ENCODE measurements at regions of chr18 and their contacts with region 1.

Region 1: DNA sequence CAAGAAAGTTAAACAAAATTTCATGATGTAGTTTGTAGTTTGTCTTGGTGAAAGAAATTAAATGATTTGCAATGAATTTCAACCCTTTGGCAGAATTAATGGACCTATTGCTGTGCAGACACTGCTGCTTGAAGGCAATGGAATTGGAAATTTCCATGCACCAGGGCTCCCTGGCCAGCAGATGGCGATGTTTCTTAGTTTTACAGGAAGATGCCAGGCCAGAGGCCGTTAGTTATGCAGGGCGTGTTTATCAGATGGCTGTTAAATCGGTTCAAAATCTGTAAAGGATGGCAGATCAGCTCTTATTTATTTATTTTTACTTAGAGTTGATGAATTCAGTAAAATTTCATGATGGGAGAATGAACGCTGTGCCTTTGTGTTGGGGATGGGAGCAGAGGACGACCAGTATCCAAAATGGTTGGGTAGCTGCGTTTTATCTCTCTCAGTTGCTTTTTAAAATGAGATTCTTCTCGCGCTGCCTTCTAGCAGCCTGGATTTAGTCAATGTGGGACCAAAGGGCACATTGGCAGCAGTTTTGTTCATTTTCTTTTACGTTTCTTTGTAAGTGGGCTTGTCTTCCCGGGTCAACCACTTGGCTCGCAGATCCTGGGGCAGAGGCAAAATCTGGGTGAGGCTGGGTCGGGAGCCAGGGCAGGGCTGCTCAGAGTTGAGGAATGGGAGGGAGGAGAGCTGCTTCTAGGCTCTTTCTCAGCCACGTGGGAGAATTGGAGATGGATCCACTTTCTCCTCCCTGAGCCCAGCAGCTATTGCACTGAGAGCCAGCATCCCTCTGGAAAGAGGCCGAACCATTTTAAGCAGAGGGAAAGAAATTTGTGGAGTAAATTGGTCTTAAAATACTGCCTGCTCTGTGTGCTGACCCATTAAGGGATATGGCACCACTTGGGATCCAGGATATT is 344.0 kb downstream of the PIK3C3 start:
- DNase-seq: peak; percentile 79
- H3K4me3 Mint-ChIP-seq: no peak overlapping the region
- H3K27ac Mint-ChIP-seq: no peak overlapping the region
- H3K4me1 Mint-ChIP-seq: no peaks in the 10 kb centered on the region
- H3K27me3 Mint-ChIP-seq: peaks cover 7% of the 10 kb centered on the region

Region 2: DNA sequence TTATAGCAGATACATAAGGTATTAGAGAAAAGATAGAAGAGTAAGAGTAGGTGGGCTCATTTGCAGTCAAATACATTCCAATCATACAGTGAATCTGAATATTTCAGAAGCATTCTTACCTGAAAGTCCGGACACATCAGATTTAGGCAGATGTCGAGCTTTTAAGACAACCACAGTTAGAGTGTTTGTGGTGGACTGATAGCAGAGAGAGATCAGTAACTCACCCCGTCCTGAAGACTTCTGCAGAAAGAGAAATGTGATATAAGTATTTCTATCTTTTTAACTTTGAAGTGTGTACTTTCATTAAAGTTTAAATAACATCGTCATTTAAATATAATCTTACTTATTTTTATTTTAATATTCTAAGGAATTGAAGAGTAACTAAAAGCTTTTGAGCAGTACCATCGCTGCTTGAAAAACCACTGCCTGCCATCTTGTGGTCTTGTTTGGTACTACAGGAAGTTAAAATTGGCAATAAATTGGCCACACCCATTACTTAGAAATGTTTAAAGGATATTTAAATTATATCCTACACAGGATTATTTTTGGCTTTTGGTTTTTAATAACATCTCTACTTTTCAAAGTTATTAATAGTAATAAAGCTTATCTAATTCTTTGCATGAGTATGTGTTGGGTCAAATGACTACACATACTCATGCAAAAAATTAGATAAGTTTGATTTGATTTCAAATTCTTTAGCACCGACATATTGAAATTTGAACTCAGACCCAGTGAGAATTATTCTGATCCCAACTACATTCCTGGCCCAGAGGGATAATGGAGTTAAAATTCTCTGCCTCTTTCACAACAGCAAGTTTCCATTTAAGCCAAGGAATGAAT is 972.8 kb after region 1 on chr18:
- CTCF ChIA-PET with region 1: interaction called, 14 read pairs
- intact Hi-C with region 1: loop called (anchors 1 kb)
- DNase-seq: peak; percentile 36
- H3K4me3 Mint-ChIP-seq: no peak overlapping the region
- H3K27ac Mint-ChIP-seq: no peak overlapping the region
- H3K4me1 Mint-ChIP-seq: no peaks in the 10 kb centered on the region
- H3K27me3 Mint-ChIP-seq: peaks cover 3% of the 10 kb centered on the region

Region 3: DNA sequence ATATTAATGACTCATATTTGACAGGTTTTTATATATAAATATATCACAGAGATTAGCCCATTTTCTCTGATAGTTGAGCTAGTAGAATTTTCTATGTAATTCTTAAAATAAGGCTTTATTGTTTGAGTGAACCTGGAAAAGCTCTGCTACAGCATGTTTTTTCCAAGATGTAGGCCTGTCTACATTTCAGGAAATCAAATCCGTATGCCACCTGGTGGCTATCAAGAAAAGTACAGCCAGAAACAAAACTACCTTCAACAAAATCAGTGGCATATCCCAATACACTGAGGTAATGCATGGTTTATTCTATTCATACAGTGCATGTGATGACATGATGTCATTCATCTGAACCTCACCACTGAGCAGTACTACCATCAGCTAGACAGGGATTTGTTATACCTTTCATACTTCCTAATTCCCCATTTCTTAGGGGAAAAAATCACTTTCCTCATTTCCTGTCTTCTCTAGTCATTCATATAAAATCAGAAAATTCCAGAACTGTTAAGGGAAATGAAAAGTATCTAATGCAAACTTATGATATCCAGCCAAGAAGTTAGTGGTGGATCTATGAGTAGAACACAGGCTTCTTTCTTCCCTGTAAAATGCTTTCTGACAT is 1288.6 kb after region 1 on chr18:
- CTCF ChIA-PET with region 1: no interaction called
- intact Hi-C with region 1: loop called (anchors 2 kb)
- DNase-seq: no peak
- H3K4me3 Mint-ChIP-seq: no peak overlapping the region
- H3K27ac Mint-ChIP-seq: no peak overlapping the region
- H3K4me1 Mint-ChIP-seq: no peaks in the 10 kb centered on the region
- H3K27me3 Mint-ChIP-seq: no peaks in the 10 kb centered on the region

Measured in activated naive CD4-positive, alpha-beta T cell treated with anti-CD3 and anti-CD28 coated beads for 36 hours (primary cell).